Mammary epithelial cell (primary cell): ENCODE measurements at regions of chr10 and their contacts with region 1.

Region 1: GRCh38 chr10:23438550-23439441 is at the start of gene OTUD1:
- DNase-seq: peak; percentile 89
- H3K4me3 ChIP-seq: peak within 1 kb of the TSS; percentile 72 to 81 (median 77)
- H3K27ac ChIP-seq: peak within 1 kb of the TSS; percentile 61
- H3K4me1 ChIP-seq: peaks cover 14% of the 10 kb centered on the region
- H3K27me3 ChIP-seq: no peaks in the 10 kb centered on the region
- CTCF ChIP-seq: peak in 1 of 2 donors; percentile 22
- total RNA-seq, gene OTUD1: 9.6 to 12.0 TPM

Region 2: GRCh38 chr10:23325132-23325531 is 113.7 kb before region 1 on chr10:
- CTCF ChIA-PET with region 1: interaction called, 4 read pairs
- dilution Hi-C with region 1: no loop called
- in situ Hi-C with region 1: no loop called
- intact Hi-C with region 1: loop called (anchors 2 kb)
- DNase-seq: no peak
- H3K4me3 ChIP-seq: no peak overlapping the region
- H3K27ac ChIP-seq: no peak overlapping the region
- H3K4me1 ChIP-seq: no peaks in the 10 kb centered on the region
- H3K27me3 ChIP-seq: no peaks in the 10 kb centered on the region
- CTCF ChIP-seq: peak in 1 of 2 donors; percentile 51

Region 3: DNA sequence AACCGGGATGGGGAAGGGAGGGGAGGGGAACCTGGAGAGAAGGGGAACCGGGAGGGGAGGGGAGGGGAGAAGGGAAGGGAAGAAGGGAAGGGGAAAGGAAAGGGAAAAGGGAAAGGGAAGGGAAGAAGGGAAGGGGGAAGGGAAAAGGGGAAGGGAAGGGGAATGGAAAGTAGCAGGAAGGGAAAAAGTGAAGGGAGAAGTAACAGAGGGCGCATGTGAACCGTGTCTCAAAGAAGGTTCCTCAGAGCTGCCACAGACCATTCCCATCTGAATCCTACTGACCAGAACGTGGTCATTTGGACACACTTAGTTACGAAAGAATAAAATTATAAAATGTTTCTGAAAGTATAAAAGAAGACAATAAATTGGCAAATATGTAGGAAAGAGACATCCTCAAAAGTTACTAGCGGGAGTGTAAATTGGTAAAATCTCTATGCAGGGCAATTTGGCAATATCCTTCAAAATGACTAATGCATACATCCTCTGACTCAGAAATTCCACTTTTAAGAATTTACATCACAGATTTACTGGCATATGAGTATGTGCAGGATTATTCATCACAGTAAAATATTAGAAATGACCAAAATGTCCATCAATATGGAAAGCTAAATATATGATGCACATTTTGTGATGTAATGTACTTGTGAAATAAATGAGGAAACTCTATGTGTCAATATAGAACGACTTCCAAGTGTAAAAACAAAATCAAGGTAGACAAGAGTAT is 107.1 kb before region 1 on chr10:
- CTCF ChIA-PET with region 1: interaction called, 4 read pairs
- dilution Hi-C with region 1: no loop called
- in situ Hi-C with region 1: no loop called
- intact Hi-C with region 1: loop called (anchors 1 kb)
- DNase-seq: peak; percentile 90
- H3K4me3 ChIP-seq: no peak overlapping the region
- H3K27ac ChIP-seq: peak overlapping the region; percentile 54
- H3K4me1 ChIP-seq: peaks cover 8% of the 10 kb centered on the region
- H3K27me3 ChIP-seq: no peaks in the 10 kb centered on the region
- CTCF ChIP-seq: no peak

Region 4: GRCh38 chr10:23379686-23380085 is 59.1 kb before region 1 on chr10:
- CTCF ChIA-PET with region 1: no interaction called
- dilution Hi-C with region 1: no loop called
- in situ Hi-C with region 1: no loop called
- intact Hi-C with region 1: loop called (anchors 1 kb)
- DNase-seq: no peak
- H3K4me3 ChIP-seq: no peak overlapping the region
- H3K27ac ChIP-seq: no peak overlapping the region
- H3K4me1 ChIP-seq: peaks cover 22% of the 10 kb centered on the region
- H3K27me3 ChIP-seq: no peaks in the 10 kb centered on the region
- CTCF ChIP-seq: no peak

Region 5: DNA sequence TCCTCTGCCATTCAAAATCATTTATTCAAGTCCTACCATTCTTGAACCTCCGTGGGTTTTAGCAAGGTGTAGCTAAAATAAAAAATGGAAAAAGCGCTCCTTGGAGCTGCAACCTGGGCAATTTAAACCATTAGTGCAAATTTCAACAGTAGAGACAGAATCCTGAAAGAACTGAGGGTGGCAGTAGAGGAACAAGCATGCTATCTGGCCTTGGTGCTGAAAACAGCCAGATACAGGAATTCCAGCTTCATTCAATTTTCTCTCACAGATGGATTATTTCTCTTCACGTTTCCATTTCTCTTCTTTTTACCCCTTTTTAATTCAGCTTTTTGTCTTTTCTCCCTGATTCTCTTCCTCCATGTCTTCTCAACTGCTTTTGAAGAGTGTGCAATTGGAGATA is 77.7 kb after region 1 on chr10:
- CTCF ChIA-PET with region 1: no interaction called
- dilution Hi-C with region 1: no loop called
- in situ Hi-C with region 1: no loop called
- intact Hi-C with region 1: loop called (anchors 5 kb)
- DNase-seq: peak; percentile 23
- H3K4me3 ChIP-seq: no peak overlapping the region
- H3K27ac ChIP-seq: no peak overlapping the region
- H3K4me1 ChIP-seq: peaks cover 9% of the 10 kb centered on the region
- H3K27me3 ChIP-seq: peaks cover 8% of the 10 kb centered on the region
- CTCF ChIP-seq: peak; percentile 62 to 72